HepG2 (cell line): ENCODE measurements at regions of chr21 and their contacts with region 1.

Region 1: GRCh38 chr21:43810505-43811261 is 21.3 kb downstream of the RRP1 start:
- DNase-seq: peak; percentile 75
- ATAC-seq: peak; percentile 79
- H3K4me3 ChIP-seq: peak overlapping the region in 1 of 3 experiments; percentile 65; a peak in 3 of 6 replicates
- H3K27ac ChIP-seq: no peak overlapping the region
- H3K4me1 ChIP-seq: peaks cover 44% of the 10 kb centered on the region
- H3K27me3 ChIP-seq: peaks cover 0 to 2% of the 10 kb centered on the region in 2 experiments; a peak in 2 of 5 replicates
- CTCF ChIP-seq: peak; percentile 99
- EP300 ChIP-seq: no peak
- POLR2A ChIP-seq: no peak
- RAD21 ChIP-seq: peak; percentile 97

Region 2: DNA sequence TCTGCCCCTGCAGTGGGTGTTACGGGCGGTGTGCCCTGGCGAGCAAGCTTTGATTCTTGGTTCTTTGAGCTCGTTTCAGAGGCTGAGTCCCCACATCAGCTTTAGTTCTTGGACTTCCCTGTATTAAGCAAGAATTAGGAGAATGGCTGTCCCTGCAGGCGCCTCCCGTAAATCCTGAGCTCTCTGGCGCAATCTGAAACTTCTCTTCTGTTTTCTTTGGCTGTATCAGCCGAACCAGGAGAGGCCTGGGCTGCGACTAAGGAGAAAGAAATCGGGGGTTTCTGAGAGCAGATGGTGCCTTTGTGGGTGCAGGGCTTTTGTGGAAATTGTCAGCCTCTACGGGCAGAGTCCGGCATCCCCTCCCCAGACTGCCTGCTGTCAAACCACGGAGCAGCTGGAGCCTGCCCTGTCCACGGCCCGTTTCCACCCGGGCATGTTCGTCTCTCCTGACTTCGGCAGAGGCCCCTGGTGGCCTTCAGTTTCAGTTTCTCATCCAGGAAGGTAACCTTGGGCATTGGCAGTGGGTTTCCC is 52.5 kb before region 1 on chr21:
- CTCF ChIA-PET with region 1: no interaction called
- POLR2A ChIA-PET with region 1: no interaction called
- in situ Hi-C with region 1: no loop called
- intact Hi-C with region 1: no loop called
- DNase-seq: no peak
- ATAC-seq: no peak
- H3K4me3 ChIP-seq: no peak overlapping the region
- H3K27ac ChIP-seq: no peak overlapping the region
- H3K4me1 ChIP-seq: no peaks in the 10 kb centered on the region
- H3K27me3 ChIP-seq: no peaks in the 10 kb centered on the region
- CTCF ChIP-seq: no peak
- EP300 ChIP-seq: no peak
- POLR2A ChIP-seq: peak in 1 of 2 experiments; percentile 32; a peak in 1 of 4 replicates
- RAD21 ChIP-seq: no peak

Region 3: DNA sequence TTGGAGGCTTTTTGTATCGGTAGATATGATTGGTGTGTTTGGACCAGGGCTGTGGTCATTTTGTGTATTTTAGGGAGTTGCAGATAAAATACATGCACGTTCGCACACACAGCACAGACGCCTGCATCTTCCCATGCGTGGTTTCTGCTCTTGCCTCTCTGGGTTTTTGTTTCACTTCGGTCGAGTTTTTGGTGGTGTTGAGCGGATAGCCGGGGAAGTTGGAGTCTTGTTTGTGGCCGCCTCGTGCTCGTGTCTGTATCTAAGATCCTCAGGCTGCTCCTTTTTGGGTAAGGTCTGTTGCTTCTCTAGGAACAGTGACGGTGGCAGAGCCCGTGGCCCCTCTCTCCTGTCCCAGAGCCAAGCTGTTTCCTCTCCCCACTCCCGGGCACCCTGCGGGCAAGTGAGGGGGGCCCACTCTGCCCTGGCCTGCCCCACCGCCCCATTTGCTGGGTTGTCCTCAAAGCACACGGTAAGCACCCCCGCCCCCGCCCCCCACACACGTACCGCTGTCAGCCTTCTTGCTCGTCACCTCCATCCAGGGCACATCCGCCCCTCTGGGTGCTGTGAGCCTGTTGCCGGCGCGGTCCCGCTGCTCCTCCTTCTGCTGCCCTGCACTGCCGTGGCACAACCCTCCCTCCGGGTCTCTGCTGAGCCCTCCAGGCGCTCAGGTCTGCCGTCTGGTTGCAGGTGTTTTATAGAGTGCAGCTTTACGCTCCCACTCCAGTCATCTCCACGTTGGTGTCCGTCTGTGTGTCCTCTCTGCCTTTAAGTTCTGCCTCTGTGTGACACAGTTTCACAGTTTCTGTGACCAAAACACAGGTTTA is 106.2 kb after region 1 on chr21:
- CTCF ChIA-PET with region 1: interaction called, 11 read pairs
- POLR2A ChIA-PET with region 1: no interaction called
- in situ Hi-C with region 1: no loop called
- intact Hi-C with region 1: loop called (anchors 10 kb)
- DNase-seq: no peak
- ATAC-seq: no peak
- H3K4me3 ChIP-seq: no peak overlapping the region
- H3K27ac ChIP-seq: no peak overlapping the region
- H3K4me1 ChIP-seq: peaks cover 40% of the 10 kb centered on the region
- H3K27me3 ChIP-seq: no peaks in the 10 kb centered on the region
- CTCF ChIP-seq: no peak
- EP300 ChIP-seq: no peak
- POLR2A ChIP-seq: no peak
- RAD21 ChIP-seq: no peak

Region 4: DNA sequence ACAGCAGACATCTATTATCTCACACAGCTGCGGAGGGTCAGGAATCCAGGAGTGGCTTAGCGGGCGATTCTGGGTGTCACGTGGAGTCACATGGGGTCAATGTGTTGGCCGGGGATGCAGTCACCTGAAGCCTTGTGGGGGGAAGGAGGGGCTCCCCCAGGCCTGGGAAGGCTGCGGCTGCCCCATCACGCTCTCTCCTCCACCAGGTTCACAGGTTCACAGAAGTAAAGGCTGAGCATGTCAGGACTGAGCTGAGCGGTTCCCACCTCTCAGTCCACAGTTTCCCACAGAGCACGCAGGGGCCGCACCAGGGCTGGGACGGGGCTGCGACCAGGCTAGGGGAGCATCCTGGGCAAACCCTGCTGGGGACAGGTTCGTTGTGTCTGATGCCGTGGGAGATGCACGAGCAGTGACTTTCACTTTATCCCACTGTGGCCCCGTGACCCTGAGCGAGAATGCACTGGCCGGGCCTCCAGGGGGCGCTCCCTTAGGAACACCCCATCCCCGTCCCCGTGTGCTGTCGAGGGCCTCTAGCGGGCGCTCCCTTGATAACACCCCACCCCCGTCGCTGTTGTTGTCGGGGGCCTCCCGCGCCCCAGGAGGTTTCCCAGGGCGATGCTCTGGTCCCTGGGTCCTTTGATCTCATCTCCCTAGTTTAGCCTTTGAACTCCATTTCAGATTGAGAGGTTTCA is 128.2 kb after region 1 on chr21:
- CTCF ChIA-PET with region 1: interaction called, 10 read pairs
- POLR2A ChIA-PET with region 1: no interaction called
- in situ Hi-C with region 1: loop called (anchors 5 kb)
- intact Hi-C with region 1: loop called (anchors 2 kb)
- DNase-seq: peak; percentile 81
- ATAC-seq: peak; percentile 89
- H3K4me3 ChIP-seq: peak overlapping the region; percentile 65 to 76 (median 69)
- H3K27ac ChIP-seq: peak overlapping the region; percentile 75
- H3K4me1 ChIP-seq: peaks cover 54% of the 10 kb centered on the region
- H3K27me3 ChIP-seq: no peaks in the 10 kb centered on the region
- CTCF ChIP-seq: peak; percentile 98
- EP300 ChIP-seq: peak in 1 of 2 experiments; percentile 22; a peak in 1 of 4 replicates
- POLR2A ChIP-seq: no peak; a peak in 1 of 4 replicates
- RAD21 ChIP-seq: peak; percentile 96

Region 5: DNA sequence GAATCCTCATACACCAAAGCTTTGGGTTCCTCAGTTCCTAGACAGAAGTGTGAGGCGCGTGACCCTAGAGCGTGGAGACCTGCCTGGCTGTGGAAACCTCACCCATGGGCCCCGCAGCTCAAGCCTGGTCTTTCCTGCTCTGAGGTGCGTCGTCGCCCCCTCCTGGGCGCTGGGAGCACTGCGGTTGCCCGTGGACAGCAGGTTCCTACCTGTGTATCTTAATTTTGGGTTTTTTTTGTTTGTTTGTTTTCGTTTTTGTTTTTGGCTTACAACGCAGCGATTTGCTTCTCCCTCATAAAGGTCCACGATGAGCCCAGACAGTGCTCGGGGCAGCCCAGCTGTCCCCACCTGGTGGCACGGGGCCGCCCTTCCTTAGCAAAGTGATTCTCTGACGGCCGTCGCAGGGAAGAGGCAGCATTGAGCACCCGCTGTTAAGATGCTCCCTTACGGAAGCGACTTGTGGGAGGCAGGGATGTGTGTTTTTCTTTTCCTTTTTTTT is 164.9 kb after region 1 on chr21:
- CTCF ChIA-PET with region 1: interaction called, 11 read pairs
- POLR2A ChIA-PET with region 1: no interaction called
- in situ Hi-C with region 1: no loop called
- intact Hi-C with region 1: no loop called
- DNase-seq: peak; percentile 32
- ATAC-seq: peak; percentile 86
- H3K4me3 ChIP-seq: no peak overlapping the region
- H3K27ac ChIP-seq: no peak overlapping the region
- H3K4me1 ChIP-seq: peaks cover 17% of the 10 kb centered on the region
- H3K27me3 ChIP-seq: no peaks in the 10 kb centered on the region
- CTCF ChIP-seq: peak; percentile 91
- EP300 ChIP-seq: no peak
- POLR2A ChIP-seq: no peak
- RAD21 ChIP-seq: peak; percentile 80